ENCODE measurements at regions of chr6 and their contacts with region 1.

Region 1: GRCh38 chr6:116971959-116972358 is 94.9 kb downstream of the RFX6 start:
- DNase-seq: peak in 1 of 2 donors; percentile 10
- ATAC-seq: peak; percentile 65

Region 2: GRCh38 chr6:117089604-117090003 is 117.6 kb after region 1 on chr6:
- intact Hi-C with region 1: no loop called
- DNase-seq: no peak
- ATAC-seq: no peak

Region 3: DNA sequence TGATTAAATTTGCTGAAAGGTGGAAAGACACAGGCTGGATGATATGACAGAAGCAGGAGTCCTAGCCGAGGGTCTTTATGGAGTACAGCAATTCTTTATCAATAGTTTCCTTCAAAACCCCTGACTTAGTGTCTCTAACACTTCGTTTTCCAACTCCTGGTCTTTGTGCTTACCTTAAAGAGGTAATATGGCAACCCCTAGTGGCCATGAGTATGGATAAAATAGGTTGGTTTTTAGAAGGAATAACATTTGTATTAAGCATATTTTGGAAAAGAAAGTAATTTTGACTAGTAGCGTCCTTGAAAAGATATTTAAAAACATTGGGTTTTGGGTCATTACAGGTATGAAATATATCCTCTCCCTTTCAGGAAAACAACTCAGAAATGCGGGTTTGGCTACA is 345.3 kb after region 1 on chr6:
- intact Hi-C with region 1: loop called in 1 of 2 experiments (anchors 10 kb)
- DNase-seq: no peak
- ATAC-seq: peak; percentile 54

Measured in left colon (tissue), 2 donors.